Activated naive CD4-positive, alpha-beta T cell treated with anti-CD3 and anti-CD28 coated beads, Interleukin-2, amount 10 ng/mL, durations not matched to agents 7 days and 5 days (primary cell): ENCODE measurements at regions of chr2 and their contacts with region 1.

Region 1: DNA sequence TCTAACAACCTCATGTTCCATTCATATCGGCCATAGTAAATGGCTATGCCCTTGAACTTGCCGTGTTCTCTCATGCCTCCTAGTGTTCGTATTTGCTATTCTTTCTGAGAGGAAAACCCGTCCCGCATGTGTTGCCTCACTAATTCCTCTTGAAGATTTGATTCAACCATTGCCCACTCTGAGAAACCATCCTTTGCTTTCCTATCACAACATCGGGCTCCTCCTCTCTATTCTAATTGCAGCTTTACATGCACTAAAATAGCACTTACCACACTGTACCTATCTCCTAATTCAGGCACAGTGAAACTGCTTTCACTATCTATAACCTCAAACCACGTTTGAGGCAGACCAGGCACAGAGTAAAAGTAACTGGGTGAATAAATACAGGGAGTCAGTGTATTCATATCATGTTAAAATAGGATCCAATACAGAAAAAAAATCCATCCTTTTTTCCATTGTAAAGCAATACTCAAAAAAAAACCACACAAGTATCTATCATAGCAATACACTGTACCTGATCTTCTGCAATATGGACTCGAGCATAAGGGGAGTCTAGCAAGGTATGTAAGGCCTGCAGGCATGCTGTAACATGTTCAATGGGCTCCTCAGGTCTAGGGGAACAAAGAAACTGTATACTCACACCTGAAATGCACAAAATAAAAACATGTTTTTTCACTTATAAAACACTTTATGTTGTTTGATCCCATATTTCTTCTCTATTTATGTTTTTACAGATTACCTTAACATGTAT is 39.0 kb upstream of the STRN start:
- DNase-seq: peak; percentile 47
- H3K4me3 Mint-ChIP-seq: peak overlapping the region; percentile 36
- H3K27ac Mint-ChIP-seq: peak overlapping the region; percentile 79
- H3K4me1 Mint-ChIP-seq: peaks cover 14% of the 10 kb centered on the region
- H3K27me3 Mint-ChIP-seq: no peaks in the 10 kb centered on the region

Region 2: DNA sequence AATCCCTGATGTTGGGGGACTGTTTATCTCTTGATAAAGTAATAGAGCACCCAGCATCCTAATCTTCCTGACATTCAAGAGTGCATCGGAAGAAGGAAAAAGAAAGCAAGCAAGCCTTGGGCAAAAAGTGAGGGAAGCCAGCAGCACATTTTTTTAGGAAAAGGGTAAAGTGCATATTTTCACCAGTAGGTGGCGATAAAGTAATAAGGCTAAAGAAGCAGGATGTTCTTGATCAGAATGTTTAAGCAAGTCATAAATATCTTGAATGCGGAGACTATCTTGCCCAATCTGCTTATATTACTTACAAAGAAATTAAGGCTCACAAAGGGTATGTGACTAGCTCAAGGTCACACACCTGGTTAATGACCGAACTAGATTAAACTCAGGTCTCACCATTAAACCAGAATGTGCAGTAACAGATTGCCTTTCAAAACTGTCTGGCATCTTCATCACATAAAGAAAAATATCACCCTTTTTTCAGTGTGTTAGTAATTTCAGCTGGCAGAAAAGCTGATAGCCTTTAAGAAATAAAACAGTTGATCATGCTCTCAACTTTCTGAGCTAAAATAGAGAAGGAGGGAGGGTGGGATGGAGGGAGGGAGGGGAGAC is 225.0 kb before region 1 on chr2:
- CTCF ChIA-PET with region 1: interaction called, 15 read pairs
- DNase-seq: no peak
- H3K4me3 Mint-ChIP-seq: no peak overlapping the region
- H3K27ac Mint-ChIP-seq: no peak overlapping the region
- H3K4me1 Mint-ChIP-seq: no peaks in the 10 kb centered on the region
- H3K27me3 Mint-ChIP-seq: peaks cover 22% of the 10 kb centered on the region